CD8-positive, alpha-beta memory T cell (primary cell): ENCODE measurements at regions of chr9 and their contacts with region 1.

Region 1: DNA sequence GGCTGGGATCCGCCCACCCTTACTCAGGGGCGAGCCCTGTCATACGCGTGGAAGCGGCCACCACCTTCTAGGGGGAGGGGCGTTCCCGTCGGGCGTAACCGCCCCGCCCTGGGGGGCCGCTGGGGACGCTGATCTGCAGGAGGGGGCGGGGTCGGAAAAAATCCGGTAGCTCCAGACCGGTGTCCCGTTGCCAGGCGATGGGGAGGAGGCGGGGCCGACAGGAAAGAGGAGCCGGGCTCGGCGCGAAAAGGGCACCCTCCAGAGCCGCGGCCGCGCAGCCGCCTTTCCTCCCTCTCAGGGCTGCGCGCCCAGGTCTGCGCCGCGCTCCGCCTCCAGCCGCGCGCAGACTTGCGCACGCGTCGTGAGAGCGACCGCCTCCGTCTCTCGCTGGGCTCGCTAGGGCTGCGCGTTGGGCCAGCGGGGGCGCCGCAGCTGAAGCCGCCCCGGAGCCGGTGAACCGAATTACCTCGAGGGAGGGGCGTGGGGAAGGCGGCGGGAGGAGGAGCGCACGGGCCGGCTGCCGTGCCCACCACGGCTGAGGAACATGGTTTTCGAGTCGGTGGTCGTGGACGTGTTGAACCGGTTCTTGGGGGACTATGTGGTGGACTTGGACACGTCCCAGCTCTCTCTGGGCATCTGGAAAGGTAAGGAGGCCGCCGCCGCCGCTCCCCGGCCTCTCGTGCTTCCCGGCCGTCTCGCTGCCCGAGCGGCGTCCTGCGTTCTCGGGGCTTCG is at the start of gene VPS13A:
- DNase-seq: peak; percentile 87 to 95 (median 92)
- H3K4me3 ChIP-seq: peak within 1 kb of the TSS; percentile 76
- H3K4me3 Mint-ChIP-seq: peak within 1 kb of the TSS; percentile 92 to 100 (median 95)
- H3K27ac ChIP-seq: peak within 1 kb of the TSS; percentile 79
- H3K27ac Mint-ChIP-seq: peak within 1 kb of the TSS; percentile 89 to 99 (median 95)
- H3K4me1 ChIP-seq: peaks cover 17% of the 10 kb centered on the region
- H3K4me1 Mint-ChIP-seq: peaks cover 28 to 40% (median 30%) of the 10 kb centered on the region in 3 donors
- H3K27me3 ChIP-seq: no peaks in the 10 kb centered on the region
- H3K27me3 Mint-ChIP-seq: no peaks in the 10 kb centered on the region
- total RNA-seq, gene VPS13A: 29.7 to 29.8 TPM

Region 2: GRCh38 chr9:77166193-77166592 is 11.1 kb before region 1 on chr9:
- CTCF ChIA-PET with region 1: interaction called, 25 read pairs
- POLR2A ChIA-PET with region 1: no interaction called
- DNase-seq: no peak
- H3K4me3 ChIP-seq: no peak overlapping the region
- H3K4me3 Mint-ChIP-seq: no peak overlapping the region
- H3K27ac ChIP-seq: no peak overlapping the region
- H3K27ac Mint-ChIP-seq: no peak overlapping the region
- H3K4me1 ChIP-seq: no peaks in the 10 kb centered on the region
- H3K4me1 Mint-ChIP-seq: no peaks in the 10 kb centered on the region
- H3K27me3 ChIP-seq: no peaks in the 10 kb centered on the region
- H3K27me3 Mint-ChIP-seq: peaks cover 2 to 4% of the 10 kb centered on the region in 2 donors